Naive thymus-derived CD4-positive, alpha-beta T cell (primary cell): ENCODE measurements at regions of chr12 and their contacts with region 1.

Region 1: GRCh38 chr12:57751788-57752667 is at the start of gene CDK4:
- DNase-seq: peak; percentile 92 to 100 (median 99)
- ATAC-seq: peak; percentile 89
- H3K4me3 ChIP-seq: peak within 1 kb of the TSS; percentile 79
- H3K4me3 Mint-ChIP-seq: peak within 1 kb of the TSS; percentile 82 to 98 (median 92)
- H3K27ac ChIP-seq: peak within 1 kb of the TSS; percentile 90
- H3K27ac Mint-ChIP-seq: peak within 1 kb of the TSS; percentile 86 to 99 (median 93)
- H3K4me1 ChIP-seq: peaks cover 32 to 42% of the 10 kb centered on the region in 2 donors
- H3K4me1 Mint-ChIP-seq: peaks cover 35 to 62% (median 59%) of the 10 kb centered on the region in 7 donors
- H3K27me3 ChIP-seq: no peaks in the 10 kb centered on the region
- H3K27me3 Mint-ChIP-seq: peaks cover 0 to 2% (median 0%) of the 10 kb centered on the region in 5 donors
- total RNA-seq, gene CDK4: 23.8 to 108 (median 42.9) TPM

Region 2: DNA sequence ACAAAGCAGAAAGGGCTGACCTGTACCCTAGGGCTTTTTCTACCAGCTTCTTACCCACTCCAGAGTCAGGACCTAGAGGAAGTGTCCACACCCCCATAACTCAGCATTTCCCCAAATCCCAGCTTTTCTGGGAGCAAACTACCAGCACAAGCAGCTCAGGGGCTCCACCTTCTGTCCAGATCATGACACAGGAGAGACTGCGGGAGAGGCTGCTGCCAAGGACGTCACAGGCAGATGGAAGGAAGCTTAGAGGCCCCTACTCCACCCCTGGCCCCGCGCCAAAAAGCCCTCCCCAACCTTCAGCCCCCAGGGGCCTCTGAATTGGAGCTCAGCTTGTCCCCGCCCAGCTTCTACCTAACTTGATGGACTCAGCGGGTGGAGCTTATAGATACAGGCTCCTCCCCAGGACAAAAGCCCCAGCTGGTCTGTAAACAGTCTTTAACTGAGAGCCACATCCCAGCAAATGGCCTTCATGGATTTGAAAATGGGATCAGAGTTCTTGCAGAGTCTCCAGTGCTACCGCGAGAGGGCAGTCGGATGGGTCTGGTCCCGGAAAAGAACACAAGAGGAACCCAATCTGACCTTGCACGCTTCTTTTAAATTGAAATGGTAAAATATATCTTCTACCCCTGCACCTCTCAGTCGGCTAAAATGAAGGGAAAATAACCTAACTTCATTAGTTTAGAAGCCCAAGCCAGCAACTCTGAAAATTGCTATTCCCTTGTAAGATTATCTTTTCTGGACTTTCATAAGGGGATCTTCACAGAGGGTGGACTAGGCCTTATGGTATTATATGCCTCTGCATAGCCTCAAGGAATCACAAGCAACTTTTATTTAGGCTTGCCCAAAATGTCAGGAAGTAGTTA is 1115.1 kb before region 1 on chr12:
- CTCF ChIA-PET with region 1: no interaction called
- POLR2A ChIA-PET with region 1: no interaction called
- intact Hi-C with region 1: loop called in 1 of 2 experiments (anchors 5 kb)
- DNase-seq: peak; percentile 86 to 99 (median 94)
- ATAC-seq: peak; percentile 83
- H3K4me3 ChIP-seq: peak overlapping the region; percentile 73
- H3K4me3 Mint-ChIP-seq: peak overlapping the region; percentile 87 to 100 (median 96)
- H3K27ac ChIP-seq: peak overlapping the region; percentile 83
- H3K27ac Mint-ChIP-seq: peak overlapping the region; percentile 89 to 99 (median 97)
- H3K4me1 ChIP-seq: peaks cover 27 to 36% of the 10 kb centered on the region in 2 donors
- H3K4me1 Mint-ChIP-seq: peaks cover 28 to 69% (median 57%) of the 10 kb centered on the region in 7 donors
- H3K27me3 ChIP-seq: no peaks in the 10 kb centered on the region
- H3K27me3 Mint-ChIP-seq: no peaks in the 10 kb centered on the region

Region 3: DNA sequence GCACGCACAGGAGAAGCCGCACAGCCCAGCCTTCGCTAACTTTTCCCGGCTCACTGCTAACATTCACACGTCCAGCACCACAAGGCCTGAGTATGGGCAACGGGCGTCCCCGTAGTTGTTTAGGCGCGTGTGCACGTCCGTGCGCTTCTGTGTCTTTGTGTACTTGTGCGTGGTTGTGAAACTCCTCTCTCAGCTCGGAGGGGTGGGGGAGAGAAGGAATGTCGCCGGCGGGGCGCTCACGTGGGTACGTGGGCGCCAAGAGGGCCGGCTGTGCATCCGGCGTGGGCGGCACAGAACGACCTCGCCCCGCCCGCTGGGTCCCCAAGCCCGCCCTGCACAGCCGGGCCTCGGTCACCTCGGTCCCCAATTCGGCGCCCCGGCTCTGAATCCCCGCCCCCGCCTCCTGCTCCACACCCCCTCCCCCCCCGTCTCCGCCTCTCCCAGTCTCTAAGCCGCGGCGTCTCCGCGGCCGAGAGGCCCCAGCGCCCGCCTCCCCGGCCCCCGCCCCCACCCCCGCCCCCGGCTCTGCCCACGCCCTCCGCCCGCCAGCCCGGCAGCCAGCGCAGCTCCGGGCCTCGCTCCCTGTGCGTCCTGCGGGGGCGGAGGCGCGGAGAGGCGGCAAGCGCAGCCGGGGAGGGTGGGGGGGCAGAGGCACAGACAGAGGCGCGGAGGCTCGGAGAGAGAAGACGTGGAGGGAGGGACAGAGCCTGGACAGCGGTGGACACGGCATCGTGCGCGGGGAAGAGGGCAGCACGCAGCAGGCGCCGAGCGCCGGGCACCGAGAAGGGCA is 663.4 kb before region 1 on chr12 and contains the start of gene NAB2:
- CTCF ChIA-PET with region 1: no interaction called
- POLR2A ChIA-PET with region 1: no interaction called
- intact Hi-C with region 1: loop called in 1 of 2 experiments (anchors 5 kb)
- DNase-seq: peak; percentile 79 to 91 (median 88)
- ATAC-seq: peak; percentile 84
- H3K4me3 ChIP-seq: peak within 1 kb of the TSS; percentile 94
- H3K4me3 Mint-ChIP-seq: peak within 1 kb of the TSS; percentile 94 to 98 (median 96)
- H3K27ac ChIP-seq: peak within 1 kb of the TSS; percentile 100
- H3K27ac Mint-ChIP-seq: peak within 1 kb of the TSS; percentile 94 to 99 (median 97)
- H3K4me1 ChIP-seq: peaks cover 23 to 46% of the 10 kb centered on the region in 2 donors
- H3K4me1 Mint-ChIP-seq: peaks cover 40 to 68% (median 58%) of the 10 kb centered on the region in 7 donors
- H3K27me3 ChIP-seq: no peaks in the 10 kb centered on the region
- H3K27me3 Mint-ChIP-seq: no peaks in the 10 kb centered on the region
- total RNA-seq, gene NAB2: 5.7 to 22.4 (median 15.5) TPM

Region 4: DNA sequence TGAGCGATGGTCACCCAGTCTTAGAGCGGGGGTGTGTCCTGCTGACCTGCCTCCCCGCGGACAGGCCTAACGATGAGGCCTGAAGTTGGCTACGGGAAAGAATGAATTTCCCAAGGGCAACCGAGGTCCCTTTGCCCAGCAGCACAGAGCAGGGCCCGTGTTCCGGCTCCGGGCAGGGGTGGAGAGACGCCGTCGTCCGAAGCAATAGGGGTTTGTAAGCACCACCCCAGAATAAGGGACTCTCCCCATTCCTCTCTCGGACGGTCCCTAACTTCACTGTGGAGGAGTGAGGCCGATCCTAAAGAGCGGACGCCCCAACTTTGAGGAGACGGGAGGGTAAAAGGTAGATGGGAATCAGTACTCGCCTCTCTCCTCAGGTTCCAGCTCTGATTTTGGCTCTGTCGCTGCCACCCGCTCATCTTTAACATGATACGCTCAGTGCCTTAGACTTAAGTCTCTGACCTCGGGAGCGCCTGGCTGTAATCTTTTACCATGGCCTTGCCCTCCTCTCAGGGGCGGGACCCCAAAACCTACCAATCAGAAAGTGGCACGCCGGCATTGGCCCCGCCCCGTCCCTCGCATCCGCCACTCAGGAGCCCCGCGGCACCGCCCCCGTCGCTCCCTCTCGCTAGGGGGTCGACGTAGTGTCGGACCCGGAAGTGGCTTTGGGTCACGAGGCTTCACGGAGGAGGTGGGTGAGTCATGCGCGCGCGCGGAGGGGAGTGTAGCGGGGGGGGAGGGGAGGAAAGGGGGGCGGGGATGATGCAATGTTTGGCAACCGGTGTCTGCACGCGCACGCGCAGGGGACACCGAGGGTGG is 231.8 kb before region 1 on chr12 and contains the start of gene DDIT3:
- CTCF ChIA-PET with region 1: no interaction called
- POLR2A ChIA-PET with region 1: no interaction called
- intact Hi-C with region 1: loop called (anchors 1 kb)
- DNase-seq: peak; percentile 98 to 99 (median 99)
- ATAC-seq: peak; percentile 89
- H3K4me3 ChIP-seq: peak within 1 kb of the TSS; percentile 100
- H3K4me3 Mint-ChIP-seq: peak within 1 kb of the TSS; percentile 89 to 99 (median 98)
- H3K27ac ChIP-seq: peak within 1 kb of the TSS; percentile 95
- H3K27ac Mint-ChIP-seq: peak within 1 kb of the TSS; percentile 97 to 100 (median 99)
- H3K4me1 ChIP-seq: peaks cover 32 to 41% of the 10 kb centered on the region in 2 donors
- H3K4me1 Mint-ChIP-seq: peaks cover 47 to 80% (median 56%) of the 10 kb centered on the region in 7 donors
- H3K27me3 ChIP-seq: no peaks in the 10 kb centered on the region
- H3K27me3 Mint-ChIP-seq: peaks cover 0 to 7% (median 0%) of the 10 kb centered on the region in 5 donors
- total RNA-seq, gene DDIT3: 19.6 to 124 (median 51.6) TPM

Region 5: DNA sequence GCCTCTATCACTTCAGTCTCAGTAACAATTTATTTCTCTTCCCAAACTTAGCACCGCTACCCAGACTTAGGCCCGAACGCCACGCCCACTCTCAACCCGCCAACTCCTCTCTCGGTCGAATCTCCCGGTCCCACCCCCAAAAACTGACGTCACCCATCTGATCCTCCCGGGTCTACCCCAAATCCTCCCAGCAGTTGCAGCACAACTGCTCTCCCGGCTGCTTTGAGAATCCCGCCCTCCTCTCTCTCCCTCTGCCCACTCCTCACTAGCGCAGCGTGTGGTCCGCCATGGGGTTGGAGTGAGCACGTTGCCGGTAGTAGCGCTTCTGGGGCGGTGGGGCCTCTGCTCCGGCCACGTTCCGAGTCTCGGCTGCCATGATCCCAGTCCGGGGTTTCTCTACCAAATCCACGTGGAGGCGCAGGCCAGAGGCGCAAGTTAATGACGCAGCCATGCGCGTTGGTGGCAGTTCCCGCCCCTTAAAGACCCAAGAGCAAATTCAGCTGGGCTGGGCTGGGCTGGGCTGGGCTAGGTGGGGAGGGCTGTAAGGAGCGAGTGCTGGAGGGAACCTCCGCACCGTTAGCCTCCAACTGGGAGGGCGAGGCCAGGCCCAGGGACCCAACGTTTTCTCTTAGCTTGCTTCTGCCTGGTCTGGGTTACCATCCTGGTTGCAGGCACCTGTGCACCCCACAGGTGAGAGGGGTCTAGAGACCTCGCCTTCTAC is 19.8 kb after region 1 on chr12 and contains the start of gene METTL1:
- CTCF ChIA-PET with region 1: interaction called, 14 read pairs
- POLR2A ChIA-PET with region 1: interaction called, 4 read pairs
- intact Hi-C with region 1: loop called (anchors 1 kb)
- DNase-seq: peak; percentile 70 to 91 (median 86)
- ATAC-seq: peak; percentile 92
- H3K4me3 ChIP-seq: peak within 1 kb of the TSS; percentile 99
- H3K4me3 Mint-ChIP-seq: peak within 1 kb of the TSS; percentile 88 to 97 (median 94)
- H3K27ac ChIP-seq: peak within 1 kb of the TSS; percentile 90
- H3K27ac Mint-ChIP-seq: peak within 1 kb of the TSS; percentile 74 to 98 (median 97)
- H3K4me1 ChIP-seq: peaks cover 6 to 13% of the 10 kb centered on the region in 2 donors
- H3K4me1 Mint-ChIP-seq: peaks cover 21 to 35% (median 25%) of the 10 kb centered on the region in 7 donors
- H3K27me3 ChIP-seq: no peaks in the 10 kb centered on the region
- H3K27me3 Mint-ChIP-seq: peaks cover 0 to 3% (median 2%) of the 10 kb centered on the region in 5 donors
- total RNA-seq, gene METTL1: 11.8 to 30.9 (median 16.0) TPM

Region 6: DNA sequence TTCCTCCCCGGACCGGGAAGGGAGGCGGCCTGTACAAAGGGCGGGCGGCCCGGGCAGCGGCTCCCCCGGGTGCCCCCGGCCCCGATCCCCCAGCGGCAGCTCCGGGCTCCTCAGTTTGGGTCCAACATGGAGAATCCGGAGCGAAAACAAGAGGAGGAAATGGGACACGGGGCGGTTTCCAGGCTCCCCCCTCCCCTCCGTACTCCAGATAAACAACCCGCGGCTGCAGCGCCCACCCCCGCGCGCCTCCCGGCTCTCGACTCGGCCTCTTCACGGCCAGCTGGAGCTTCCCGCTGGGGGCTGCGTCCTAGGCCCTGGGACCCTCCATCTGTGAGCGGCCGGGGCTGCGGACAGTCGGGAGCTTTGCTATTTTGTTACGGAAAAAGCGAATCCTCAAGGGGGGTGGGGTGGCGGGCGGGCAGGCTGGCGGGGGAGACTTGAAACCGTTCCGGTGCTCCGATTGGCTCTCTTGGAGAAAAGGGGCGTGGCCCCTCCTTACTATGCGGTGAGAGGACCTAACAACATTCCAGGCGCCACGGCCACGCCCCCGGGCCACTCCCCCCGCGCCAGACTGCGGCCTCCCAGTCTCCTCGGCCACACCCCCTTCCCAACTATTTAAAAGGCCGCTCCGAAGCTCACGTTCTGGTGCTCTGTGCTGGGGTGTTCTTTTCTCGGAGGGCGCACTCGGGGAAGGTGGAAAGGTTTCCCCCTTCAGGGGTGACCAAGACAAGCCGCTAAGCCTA is 94.7 kb after region 1 on chr12 and contains the start of gene CTDSP2:
- CTCF ChIA-PET with region 1: interaction called, 4 read pairs
- POLR2A ChIA-PET with region 1: interaction called, 3 read pairs
- intact Hi-C with region 1: loop called (anchors 1 to 2 kb)
- DNase-seq: peak; percentile 59 to 92 (median 82)
- ATAC-seq: peak; percentile 85
- H3K4me3 ChIP-seq: peak within 1 kb of the TSS; percentile 79
- H3K4me3 Mint-ChIP-seq: peak within 1 kb of the TSS; percentile 87 to 97 (median 92)
- H3K27ac ChIP-seq: peak within 1 kb of the TSS; percentile 89
- H3K27ac Mint-ChIP-seq: peak within 1 kb of the TSS; percentile 75 to 94 (median 89)
- H3K4me1 ChIP-seq: peaks cover 15 to 30% of the 10 kb centered on the region in 2 donors
- H3K4me1 Mint-ChIP-seq: peaks cover 48 to 57% (median 50%) of the 10 kb centered on the region in 7 donors
- H3K27me3 ChIP-seq: no peaks in the 10 kb centered on the region
- H3K27me3 Mint-ChIP-seq: peaks cover 0 to 39% (median 9%) of the 10 kb centered on the region in 5 donors
- total RNA-seq, gene CTDSP2: 124 to 295 (median 145) TPM

Region 7: DNA sequence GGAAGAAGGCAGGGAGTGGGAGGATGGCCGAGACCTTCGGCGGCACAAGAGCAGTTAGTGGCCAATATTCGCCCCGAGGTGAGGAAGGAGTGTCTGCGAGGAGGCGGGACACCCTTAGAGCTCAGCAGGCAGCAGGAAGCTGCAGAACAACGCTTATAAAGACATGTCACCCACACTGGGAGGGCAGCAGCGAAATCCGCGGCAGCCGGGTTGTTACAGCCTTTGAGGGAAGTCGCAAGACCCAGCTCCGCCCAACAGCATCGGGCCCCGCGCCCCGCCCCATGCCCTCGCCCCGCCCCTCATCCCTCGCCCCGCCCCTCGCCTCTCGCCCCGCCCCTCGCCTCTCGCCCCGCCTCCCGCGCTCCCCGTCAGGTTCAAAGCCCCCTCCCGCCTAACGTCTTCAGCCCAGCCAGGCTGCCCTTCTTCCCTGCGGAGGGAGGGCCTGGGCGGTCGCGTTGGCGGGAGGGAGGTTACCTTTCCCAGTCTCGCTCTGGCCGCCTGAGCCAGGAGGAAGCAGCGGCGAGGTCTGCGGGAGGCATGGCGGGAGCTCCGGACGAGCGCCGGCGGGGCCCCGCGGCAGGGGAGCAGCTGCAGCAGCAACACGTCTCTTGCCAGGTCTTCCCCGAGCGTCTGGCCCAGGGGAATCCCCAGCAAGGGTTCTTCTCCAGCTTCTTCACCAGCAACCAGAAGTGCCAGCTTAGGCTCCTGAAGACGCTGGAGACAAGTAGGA is 189.3 kb after region 1 on chr12 and contains the start of gene ATP23:
- CTCF ChIA-PET with region 1: no interaction called
- POLR2A ChIA-PET with region 1: no interaction called
- intact Hi-C with region 1: loop called (anchors 1 kb)
- DNase-seq: peak; percentile 82 to 95 (median 90)
- ATAC-seq: peak; percentile 96
- H3K4me3 ChIP-seq: peak within 1 kb of the TSS; percentile 84
- H3K4me3 Mint-ChIP-seq: peak within 1 kb of the TSS; percentile 87 to 100 (median 98)
- H3K27ac ChIP-seq: peak within 1 kb of the TSS; percentile 90
- H3K27ac Mint-ChIP-seq: peak within 1 kb of the TSS; percentile 93 to 100 (median 99)
- H3K4me1 ChIP-seq: peaks cover 20 to 28% of the 10 kb centered on the region in 2 donors
- H3K4me1 Mint-ChIP-seq: peaks cover 24 to 54% (median 47%) of the 10 kb centered on the region in 7 donors
- H3K27me3 ChIP-seq: no peaks in the 10 kb centered on the region
- H3K27me3 Mint-ChIP-seq: no peaks in the 10 kb centered on the region
- total RNA-seq, gene ATP23: 7.2 to 12.3 (median 8.2) TPM